ENCODE measurements at regions of chr12 and their contacts with region 1.

Region 1: DNA sequence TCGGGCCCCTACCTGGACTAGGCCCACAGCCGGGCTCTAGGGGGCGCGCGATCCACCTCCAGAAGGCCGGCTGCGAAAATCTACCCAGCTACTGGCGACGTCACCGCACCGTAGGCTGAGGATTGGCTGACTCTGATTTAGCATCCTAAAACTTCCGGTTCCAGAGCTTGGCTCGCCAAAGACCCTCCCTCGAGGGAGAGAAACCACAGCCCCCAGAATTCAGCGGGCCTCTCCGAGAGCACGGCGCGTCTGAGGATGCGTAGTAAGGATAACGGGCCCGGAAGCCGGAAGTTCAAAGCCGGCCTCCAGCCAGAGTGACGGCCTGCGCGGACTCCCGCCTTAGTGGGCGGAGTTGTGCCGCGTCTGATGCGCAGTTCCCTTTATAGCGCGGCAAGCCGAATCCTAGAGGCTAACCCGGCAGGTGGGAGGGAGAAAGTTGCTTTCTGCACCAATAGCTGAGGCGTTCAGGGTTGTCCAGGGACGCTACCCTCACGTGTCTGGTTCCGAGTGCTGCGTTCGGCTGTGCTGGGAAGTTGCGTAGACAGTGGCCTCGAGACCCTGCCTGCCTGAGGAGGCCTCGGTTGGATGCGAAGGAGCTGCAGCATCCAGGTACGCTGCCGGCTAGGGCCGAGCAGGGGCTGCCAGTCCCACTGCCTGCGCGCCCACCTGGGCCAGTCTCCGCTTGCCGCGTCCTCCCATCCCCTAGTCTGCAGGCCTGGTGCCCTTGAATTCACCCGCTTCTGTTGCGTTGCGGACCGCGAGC is at the start of gene COX14:
- DNase-seq: peak; percentile 100
- H3K4me3 Mint-ChIP-seq: peak within 1 kb of the TSS; percentile 92
- H3K27ac Mint-ChIP-seq: peak within 1 kb of the TSS; percentile 93
- H3K4me1 Mint-ChIP-seq: peaks cover 39% of the 10 kb centered on the region
- H3K27me3 Mint-ChIP-seq: no peaks in the 10 kb centered on the region
- total RNA-seq, gene COX14: 46.1 to 48.7 TPM

Region 2: GRCh38 chr12:49888461-49889151 is 223.3 kb before region 1 on chr12:
- CTCF ChIA-PET with region 1: no interaction called
- POLR2A ChIA-PET with region 1: no interaction called
- intact Hi-C with region 1: no loop called
- DNase-seq: no peak
- H3K4me3 Mint-ChIP-seq: no peak overlapping the region
- H3K27ac Mint-ChIP-seq: no peak overlapping the region
- H3K4me1 Mint-ChIP-seq: no peaks in the 10 kb centered on the region
- H3K27me3 Mint-ChIP-seq: peaks cover 8% of the 10 kb centered on the region

Region 3: DNA sequence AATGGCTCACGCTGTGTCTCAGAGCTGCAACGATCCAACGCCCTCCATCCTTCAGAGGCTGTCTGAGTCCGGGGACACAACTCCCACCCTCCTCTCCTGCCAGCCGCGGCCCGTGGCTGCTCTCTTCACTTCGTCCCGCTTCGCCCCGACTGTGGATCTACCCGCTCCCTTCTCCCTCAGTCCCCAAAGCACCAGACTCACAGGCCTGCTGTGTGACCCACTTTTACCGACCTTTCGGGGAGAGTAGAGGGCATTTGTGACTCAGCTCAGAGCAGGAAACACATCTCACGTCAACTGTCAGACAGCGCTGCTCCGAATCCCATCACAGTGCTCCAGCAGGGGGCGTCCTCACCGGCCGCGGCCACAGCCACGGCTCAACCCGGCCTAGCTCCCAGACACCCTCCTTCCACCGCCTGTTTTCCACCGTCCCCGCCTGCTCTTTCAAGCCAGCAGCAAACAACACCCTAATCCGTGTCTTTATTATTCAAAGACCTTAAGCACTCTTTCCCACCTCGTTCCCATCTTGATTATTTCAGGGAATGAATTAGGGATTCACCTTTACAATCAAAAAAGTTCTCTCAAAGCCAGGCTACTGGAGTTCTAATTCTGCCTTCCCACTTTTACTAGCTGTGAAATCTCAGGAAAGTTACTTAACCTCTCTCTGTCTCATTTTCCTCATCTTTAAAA is 166.3 kb before region 1 on chr12:
- CTCF ChIA-PET with region 1: interaction called, 17 read pairs
- POLR2A ChIA-PET with region 1: no interaction called
- intact Hi-C with region 1: no loop called
- DNase-seq: peak; percentile 93
- H3K4me3 Mint-ChIP-seq: peak overlapping the region; percentile 70
- H3K27ac Mint-ChIP-seq: peak overlapping the region; percentile 81
- H3K4me1 Mint-ChIP-seq: peaks cover 33% of the 10 kb centered on the region
- H3K27me3 Mint-ChIP-seq: no peaks in the 10 kb centered on the region

Region 4: GRCh38 chr12:50016501-50017475 is 95.1 kb before region 1 on chr12:
- CTCF ChIA-PET with region 1: no interaction called
- POLR2A ChIA-PET with region 1: no interaction called
- intact Hi-C with region 1: no loop called
- DNase-seq: no peak
- H3K4me3 Mint-ChIP-seq: no peak overlapping the region
- H3K27ac Mint-ChIP-seq: no peak overlapping the region
- H3K4me1 Mint-ChIP-seq: peaks cover 16% of the 10 kb centered on the region
- H3K27me3 Mint-ChIP-seq: no peaks in the 10 kb centered on the region

Region 5: DNA sequence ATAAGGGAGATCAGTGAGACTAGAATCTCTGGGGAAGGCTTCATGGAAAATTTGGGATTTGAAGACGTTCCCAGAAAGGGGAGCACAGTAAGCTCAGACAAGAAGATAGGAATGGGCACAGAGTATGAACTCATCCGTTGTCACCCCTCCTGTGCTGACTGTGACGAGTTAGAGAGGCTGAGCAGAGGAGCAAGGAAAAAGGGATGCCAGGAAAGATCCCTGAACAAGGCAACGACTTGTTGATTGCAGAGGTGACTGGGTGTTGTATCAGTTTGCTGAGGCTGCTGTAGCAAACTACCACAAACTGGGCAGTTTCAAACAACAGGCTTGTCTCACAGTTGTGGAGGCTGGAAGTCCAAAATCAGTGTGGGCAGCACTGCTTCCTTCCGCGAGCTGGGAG is 13.9 kb before region 1 on chr12:
- CTCF ChIA-PET with region 1: interaction called, 138 read pairs
- POLR2A ChIA-PET with region 1: interaction called, 8 read pairs
- intact Hi-C with region 1: no loop called
- DNase-seq: no peak
- H3K4me3 Mint-ChIP-seq: no peak overlapping the region
- H3K27ac Mint-ChIP-seq: no peak overlapping the region
- H3K4me1 Mint-ChIP-seq: no peaks in the 10 kb centered on the region
- H3K27me3 Mint-ChIP-seq: no peaks in the 10 kb centered on the region

Region 6: GRCh38 chr12:50142993-50143392 is 31.1 kb after region 1 on chr12:
- CTCF ChIA-PET with region 1: interaction called, 10 read pairs
- POLR2A ChIA-PET with region 1: no interaction called
- intact Hi-C with region 1: no loop called
- DNase-seq: no peak
- H3K4me3 Mint-ChIP-seq: no peak overlapping the region
- H3K27ac Mint-ChIP-seq: no peak overlapping the region
- H3K4me1 Mint-ChIP-seq: peaks cover 4% of the 10 kb centered on the region
- H3K27me3 Mint-ChIP-seq: no peaks in the 10 kb centered on the region

Region 7: GRCh38 chr12:50174971-50175715 is 63.3 kb after region 1 on chr12:
- CTCF ChIA-PET with region 1: interaction called, 53 read pairs
- POLR2A ChIA-PET with region 1: interaction called, 3 read pairs
- intact Hi-C with region 1: no loop called
- DNase-seq: no peak
- H3K4me3 Mint-ChIP-seq: no peak overlapping the region
- H3K27ac Mint-ChIP-seq: no peak overlapping the region
- H3K4me1 Mint-ChIP-seq: no peaks in the 10 kb centered on the region
- H3K27me3 Mint-ChIP-seq: no peaks in the 10 kb centered on the region

Region 8: GRCh38 chr12:50283229-50283923 is 171.5 kb after region 1 on chr12 and contains the start of gene LIMA1:
- CTCF ChIA-PET with region 1: interaction called, 16 read pairs
- POLR2A ChIA-PET with region 1: interaction called, 7 read pairs
- intact Hi-C with region 1: no loop called
- DNase-seq: peak; percentile 94
- H3K4me3 Mint-ChIP-seq: peak within 1 kb of the TSS; percentile 89
- H3K27ac Mint-ChIP-seq: peak within 1 kb of the TSS; percentile 62
- H3K4me1 Mint-ChIP-seq: peaks cover 25% of the 10 kb centered on the region
- H3K27me3 Mint-ChIP-seq: no peaks in the 10 kb centered on the region
- total RNA-seq, gene LIMA1: 115 to 117 TPM

Region 9: DNA sequence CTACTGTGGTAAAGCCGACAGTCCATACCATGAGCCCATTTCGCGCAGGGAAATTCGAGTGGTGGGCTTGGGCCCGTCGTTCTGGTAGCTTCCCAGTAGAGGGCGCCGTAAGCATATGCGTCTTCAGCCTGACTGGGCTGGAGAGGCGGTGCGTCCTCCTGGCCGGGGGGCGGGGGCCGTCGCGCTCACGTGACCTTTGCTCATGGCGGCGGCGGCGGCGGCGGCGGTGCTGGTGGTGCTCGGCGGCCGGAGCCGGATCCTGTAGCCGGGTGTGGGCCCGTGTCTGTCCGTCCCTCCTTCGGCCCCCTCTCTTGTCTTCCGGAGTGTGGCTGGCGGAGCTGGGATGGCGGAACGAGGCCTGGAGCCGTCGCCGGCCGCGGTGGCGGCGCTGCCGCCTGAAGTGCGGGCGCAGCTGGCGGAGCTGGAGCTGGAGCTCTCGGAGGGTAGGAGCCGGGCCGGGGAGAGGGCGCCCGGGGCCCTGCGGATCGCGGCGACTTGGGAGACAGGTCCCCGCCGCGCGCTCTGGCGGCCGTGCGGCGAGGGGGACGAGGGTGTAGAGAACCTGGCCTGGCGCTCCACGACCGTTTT is 393.0 kb after region 1 on chr12 and contains the start of gene DIP2B:
- CTCF ChIA-PET with region 1: no interaction called
- POLR2A ChIA-PET with region 1: no interaction called
- intact Hi-C with region 1: loop called (anchors 1 kb)
- DNase-seq: peak; percentile 96
- H3K4me3 Mint-ChIP-seq: peak within 1 kb of the TSS; percentile 99
- H3K27ac Mint-ChIP-seq: peak within 1 kb of the TSS; percentile 93
- H3K4me1 Mint-ChIP-seq: peaks cover 42% of the 10 kb centered on the region
- H3K27me3 Mint-ChIP-seq: no peaks in the 10 kb centered on the region
- total RNA-seq, gene DIP2B: 23.3 to 23.7 TPM

Measured in activated CD4-positive, alpha-beta memory T cell treated with anti-CD3 and anti-CD28 coated beads for 36 hours (primary cell).